Activated CD4-positive, alpha-beta memory T cell treated with anti-CD3 and anti-CD28 coated beads for 36 hours (primary cell): ENCODE measurements at regions of chr7 and their contacts with region 1.

Region 1: GRCh38 chr7:76291343-76292212 is 10.9 kb upstream of the HSPB1 start:
- DNase-seq: peak; percentile 96
- H3K4me3 Mint-ChIP-seq: peak overlapping the region; percentile 0
- H3K27ac Mint-ChIP-seq: peak overlapping the region; percentile 61
- H3K4me1 Mint-ChIP-seq: peaks cover 10% of the 10 kb centered on the region
- H3K27me3 Mint-ChIP-seq: no peaks in the 10 kb centered on the region

Region 2: GRCh38 chr7:76302347-76303201 is 11.0 kb after region 1 on chr7 and contains the start of gene HSPB1:
- CTCF ChIA-PET with region 1: interaction called, 43 read pairs
- POLR2A ChIA-PET with region 1: interaction called, 3 read pairs
- intact Hi-C with region 1: loop called (anchors 1 kb)
- DNase-seq: peak; percentile 81
- H3K4me3 Mint-ChIP-seq: peak within 1 kb of the TSS; percentile 83
- H3K27ac Mint-ChIP-seq: peak within 1 kb of the TSS; percentile 81
- H3K4me1 Mint-ChIP-seq: peaks cover 12% of the 10 kb centered on the region
- H3K27me3 Mint-ChIP-seq: peaks cover 3% of the 10 kb centered on the region
- total RNA-seq, gene HSPB1: 119 to 127 TPM

Region 3: GRCh38 chr7:76369011-76369410 is 77.4 kb after region 1 on chr7:
- CTCF ChIA-PET with region 1: no interaction called
- POLR2A ChIA-PET with region 1: no interaction called
- intact Hi-C with region 1: no loop called
- DNase-seq: no peak
- H3K4me3 Mint-ChIP-seq: no peak overlapping the region
- H3K27ac Mint-ChIP-seq: no peak overlapping the region
- H3K4me1 Mint-ChIP-seq: peaks cover 8% of the 10 kb centered on the region
- H3K27me3 Mint-ChIP-seq: peaks cover 6% of the 10 kb centered on the region